Activated CD8-positive, alpha-beta T cell treated with anti-CD3 and anti-CD28 coated beads for 36 hours (primary cell): ENCODE measurements at regions of chr1 and their contacts with region 1.

Region 1: GRCh38 chr1:11907275-11908094 is 18.7 kb downstream of the KIAA2013 start:
- DNase-seq: peak; percentile 94
- ATAC-seq: peak; percentile 65
- H3K4me3 Mint-ChIP-seq: peak overlapping the region; percentile 90
- H3K27ac Mint-ChIP-seq: peak overlapping the region; percentile 96
- H3K4me1 Mint-ChIP-seq: peaks cover 29% of the 10 kb centered on the region
- H3K27me3 Mint-ChIP-seq: peaks cover 14% of the 10 kb centered on the region
- CTCF ChIP-seq: peak; percentile 65

Region 2: GRCh38 chr1:11690407-11691301 is 216.8 kb before region 1 on chr1:
- CTCF ChIA-PET with region 1: no interaction called
- POLR2A ChIA-PET with region 1: interaction called, 11 read pairs
- intact Hi-C with region 1: no loop called
- DNase-seq: no peak
- ATAC-seq: no peak
- H3K4me3 Mint-ChIP-seq: peak overlapping the region; percentile 42
- H3K27ac Mint-ChIP-seq: no peak overlapping the region
- H3K4me1 Mint-ChIP-seq: peaks cover 22% of the 10 kb centered on the region
- H3K27me3 Mint-ChIP-seq: peaks cover 36% of the 10 kb centered on the region
- CTCF ChIP-seq: no peak

Region 3: DNA sequence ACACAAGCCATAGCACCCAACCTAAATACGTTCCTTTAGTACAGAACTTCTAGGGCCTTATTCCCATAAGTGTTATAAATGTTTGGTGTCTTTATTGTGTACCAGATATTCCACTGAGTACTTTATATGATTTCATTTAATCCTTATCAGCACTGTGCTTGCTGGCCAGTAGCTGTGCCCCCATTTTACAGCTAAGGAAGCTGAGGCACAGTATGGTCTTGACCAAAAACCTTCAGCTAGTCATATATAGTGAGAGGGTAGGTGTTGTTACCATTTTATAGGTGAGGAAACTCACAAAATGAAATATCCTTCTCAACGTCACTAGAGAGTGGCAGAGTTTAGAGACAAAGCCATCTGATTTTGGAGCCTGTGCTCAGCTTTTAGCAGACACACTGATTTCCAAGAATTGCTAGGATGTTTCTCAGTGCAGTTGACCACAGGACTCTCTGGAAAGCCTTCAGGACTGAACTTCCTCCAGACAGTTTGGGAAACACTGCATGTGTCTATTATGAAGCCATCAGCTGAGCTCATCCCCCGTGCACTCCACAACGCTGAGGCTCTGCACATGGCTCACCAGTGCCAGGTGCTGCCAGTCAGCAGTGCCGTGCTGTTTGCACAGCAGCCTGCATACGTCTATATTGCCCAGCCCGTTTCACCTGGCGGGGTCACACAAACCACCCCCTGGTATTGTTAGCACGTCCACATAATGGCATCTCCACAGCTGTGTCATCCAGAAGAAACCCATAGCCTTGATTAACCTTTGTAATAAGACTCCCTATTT is 75.3 kb before region 1 on chr1:
- CTCF ChIA-PET with region 1: interaction called, 3 read pairs
- POLR2A ChIA-PET with region 1: interaction called, 111 read pairs
- intact Hi-C with region 1: no loop called
- DNase-seq: no peak
- ATAC-seq: no peak
- H3K4me3 Mint-ChIP-seq: no peak overlapping the region
- H3K27ac Mint-ChIP-seq: no peak overlapping the region
- H3K4me1 Mint-ChIP-seq: no peaks in the 10 kb centered on the region
- H3K27me3 Mint-ChIP-seq: no peaks in the 10 kb centered on the region
- CTCF ChIP-seq: no peak

Region 4: GRCh38 chr1:11893907-11894251 is 13.6 kb before region 1 on chr1:
- CTCF ChIA-PET with region 1: interaction called, 6 read pairs
- POLR2A ChIA-PET with region 1: interaction called, 149 read pairs
- intact Hi-C with region 1: no loop called
- DNase-seq: peak; percentile 72
- ATAC-seq: peak; percentile 96
- H3K4me3 Mint-ChIP-seq: no peak overlapping the region
- H3K27ac Mint-ChIP-seq: no peak overlapping the region
- H3K4me1 Mint-ChIP-seq: no peaks in the 10 kb centered on the region
- H3K27me3 Mint-ChIP-seq: peaks cover 26% of the 10 kb centered on the region
- CTCF ChIP-seq: peak; percentile 87

Region 5: GRCh38 chr1:11990303-11991032 is 83.0 kb after region 1 on chr1:
- CTCF ChIA-PET with region 1: no interaction called
- POLR2A ChIA-PET with region 1: interaction called, 195 read pairs
- intact Hi-C with region 1: no loop called
- DNase-seq: no peak
- ATAC-seq: peak; percentile 27
- H3K4me3 Mint-ChIP-seq: no peak overlapping the region
- H3K27ac Mint-ChIP-seq: peak overlapping the region; percentile 39
- H3K4me1 Mint-ChIP-seq: peaks cover 16% of the 10 kb centered on the region
- H3K27me3 Mint-ChIP-seq: no peaks in the 10 kb centered on the region
- CTCF ChIP-seq: no peak

Region 6: DNA sequence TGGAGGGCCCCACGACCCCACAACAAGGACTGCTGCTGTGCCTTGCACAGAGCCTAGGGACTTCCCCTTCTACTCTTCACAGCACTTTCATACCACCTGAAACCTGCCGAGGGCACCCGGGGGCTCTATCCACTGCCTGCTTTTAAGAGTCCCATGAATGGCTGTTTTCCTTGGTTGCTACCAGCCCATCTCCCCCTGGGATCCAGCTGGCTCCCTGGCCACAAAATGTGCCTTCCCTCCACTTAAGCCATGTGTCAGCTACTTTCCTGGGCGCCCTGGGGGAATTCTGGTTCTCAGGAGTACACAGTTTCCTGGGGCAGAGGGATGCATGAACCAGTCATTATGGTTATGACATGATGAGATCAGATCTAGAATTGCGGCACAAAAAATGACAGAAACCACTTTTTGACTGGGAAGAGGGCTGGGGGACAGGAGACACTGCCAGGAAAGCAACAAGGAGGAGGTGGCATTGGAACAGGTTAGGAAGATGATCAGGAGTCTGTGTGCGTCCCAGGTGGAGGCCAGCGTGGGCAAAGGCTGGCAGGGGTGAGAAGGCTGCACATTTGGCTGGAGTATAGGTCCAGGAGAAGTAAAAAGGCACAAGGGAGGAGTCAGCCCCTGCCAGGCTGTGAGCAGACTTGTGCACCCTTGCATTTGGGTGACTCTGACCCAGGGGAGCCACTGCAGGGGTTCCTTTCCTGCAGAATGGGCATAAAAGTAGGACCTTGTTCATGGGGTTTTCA is 152.4 kb after region 1 on chr1:
- CTCF ChIA-PET with region 1: no interaction called
- POLR2A ChIA-PET with region 1: interaction called, 43 read pairs
- intact Hi-C with region 1: no loop called
- DNase-seq: peak; percentile 74
- ATAC-seq: peak; percentile 73
- H3K4me3 Mint-ChIP-seq: no peak overlapping the region
- H3K27ac Mint-ChIP-seq: no peak overlapping the region
- H3K4me1 Mint-ChIP-seq: peaks cover 55% of the 10 kb centered on the region
- H3K27me3 Mint-ChIP-seq: peaks cover 35% of the 10 kb centered on the region
- CTCF ChIP-seq: peak; percentile 11